ENCODE measurements at regions of chr16 and their contacts with region 1.

Region 1: DNA sequence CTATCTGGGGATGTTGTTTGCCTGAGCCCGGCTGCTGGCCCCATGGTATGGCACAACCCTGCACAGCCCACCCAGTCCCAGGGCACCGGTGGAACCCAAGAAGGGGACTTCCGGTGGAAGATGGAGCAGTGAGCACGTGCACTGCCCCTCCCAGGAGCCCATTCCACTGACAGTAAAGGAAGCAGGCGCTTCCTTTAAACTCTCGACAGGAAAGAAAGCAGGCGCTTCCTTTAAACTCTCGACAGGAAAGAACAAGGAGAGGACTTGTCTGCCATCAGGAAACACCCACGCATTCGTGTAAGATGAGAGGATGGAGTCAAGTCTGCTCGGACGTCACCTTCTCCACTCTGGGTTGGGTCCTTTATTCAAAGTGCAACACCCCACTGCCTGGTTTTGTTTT is 53.7 kb downstream of the IL21R start:
- DNase-seq: peak; percentile 68
- H3K4me3 ChIP-seq: no peak overlapping the region
- H3K27ac ChIP-seq: no peak overlapping the region
- H3K4me1 ChIP-seq: peaks cover 9% of the 10 kb centered on the region
- H3K27me3 ChIP-seq: no peaks in the 10 kb centered on the region
- CTCF ChIP-seq: no peak

Region 2: DNA sequence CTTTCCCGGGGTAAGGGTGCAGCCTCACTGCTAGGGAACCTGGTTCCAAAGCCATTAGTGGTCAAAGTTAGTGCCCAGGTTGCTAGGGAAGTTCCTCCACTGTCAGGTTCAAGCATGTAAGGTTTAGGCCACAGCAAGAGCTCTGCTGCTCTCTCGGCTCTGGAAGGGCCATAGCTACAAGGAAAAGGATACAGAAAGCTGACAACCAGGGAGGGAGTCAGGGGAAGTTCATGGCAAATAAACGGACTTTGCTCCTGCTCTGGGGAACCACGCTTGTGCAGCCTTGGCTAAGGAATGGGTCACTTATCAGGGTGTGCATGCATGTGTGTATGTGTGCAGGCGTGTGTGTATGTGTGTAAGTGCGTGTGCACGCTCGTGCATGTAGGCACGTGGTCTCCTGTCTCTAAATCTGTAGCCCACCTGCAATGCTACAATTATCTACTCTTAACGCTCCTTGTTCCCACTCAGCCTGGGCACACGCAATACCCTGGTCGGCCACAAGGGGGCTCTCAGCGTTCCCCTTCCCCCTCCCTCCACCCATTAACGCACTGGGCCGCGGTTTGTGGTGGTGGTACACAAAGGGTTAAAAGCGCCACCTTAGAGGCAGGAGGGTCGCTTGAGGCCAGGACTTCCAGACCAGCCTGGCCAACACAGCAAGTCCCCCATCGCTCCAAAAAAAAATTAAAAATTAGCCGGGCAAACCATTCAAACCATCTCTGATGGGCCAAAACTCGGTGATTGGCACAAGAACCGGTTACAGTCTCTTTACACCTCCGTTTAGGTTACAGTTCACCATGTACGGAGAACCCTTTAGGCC is 300.8 kb before region 1 on chr16:
- CTCF ChIA-PET with region 1: no interaction called
- POLR2A ChIA-PET with region 1: no interaction called
- intact Hi-C with region 1: loop called (anchors 2 kb)
- DNase-seq: peak; percentile 59
- H3K4me3 ChIP-seq: no peak overlapping the region
- H3K27ac ChIP-seq: no peak overlapping the region
- H3K4me1 ChIP-seq: no peaks in the 10 kb centered on the region
- H3K27me3 ChIP-seq: no peaks in the 10 kb centered on the region
- CTCF ChIP-seq: peak; percentile 98

Region 3: GRCh38 chr16:27367461-27368357 is 88.0 kb before region 1 on chr16:
- CTCF ChIA-PET with region 1: no interaction called
- POLR2A ChIA-PET with region 1: no interaction called
- intact Hi-C with region 1: loop called (anchors 5 kb)
- DNase-seq: peak; percentile 88
- H3K4me3 ChIP-seq: peak overlapping the region; percentile 0
- H3K27ac ChIP-seq: peak overlapping the region; percentile 54
- H3K4me1 ChIP-seq: peaks cover 15% of the 10 kb centered on the region
- H3K27me3 ChIP-seq: no peaks in the 10 kb centered on the region
- CTCF ChIP-seq: peak; percentile 75

Region 4: DNA sequence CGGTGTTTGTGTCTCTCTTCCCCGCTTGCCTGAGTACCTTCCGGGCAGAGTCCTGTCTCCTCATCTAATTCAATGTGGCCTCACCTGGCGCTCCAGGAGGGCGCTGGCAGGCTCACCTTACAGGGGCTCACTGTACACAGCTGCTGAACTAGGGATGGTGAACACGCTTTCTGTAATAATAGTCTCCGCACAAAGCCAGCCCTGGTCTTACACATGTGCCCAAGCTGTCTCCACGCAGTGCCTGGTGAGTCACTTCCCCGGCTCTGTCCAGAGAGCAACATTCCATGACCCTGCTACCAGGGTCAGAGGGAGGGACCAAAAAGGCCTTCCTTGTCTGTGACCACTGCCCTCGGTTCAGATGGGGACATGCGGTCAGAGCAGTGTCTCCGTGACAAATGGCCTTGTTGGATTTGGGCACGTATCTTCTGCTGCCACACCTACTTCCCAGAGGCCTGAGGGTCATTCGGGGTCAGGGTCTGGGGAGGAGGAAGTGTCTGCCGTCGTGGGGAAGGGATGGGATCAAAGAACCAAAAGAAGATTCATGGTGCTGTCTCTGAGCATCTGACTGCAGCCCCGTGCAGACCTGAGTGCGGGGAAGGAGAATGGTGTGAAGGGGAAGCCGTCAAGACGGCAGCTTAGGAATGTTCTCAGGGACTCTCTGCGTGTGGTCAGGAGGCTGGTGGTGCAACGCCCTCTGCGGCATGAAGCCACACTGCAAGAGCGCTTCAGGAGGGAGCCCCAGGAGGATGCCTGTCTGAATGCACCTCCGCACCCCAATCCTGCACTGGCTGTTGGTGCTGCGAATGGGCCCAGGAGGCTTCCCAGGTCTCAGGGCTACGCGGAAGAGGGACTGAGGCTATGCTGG is 15.1 kb after region 1 on chr16:
- CTCF ChIA-PET with region 1: no interaction called
- POLR2A ChIA-PET with region 1: no interaction called
- intact Hi-C with region 1: no loop called
- DNase-seq: no peak
- H3K4me3 ChIP-seq: no peak overlapping the region
- H3K27ac ChIP-seq: no peak overlapping the region
- H3K4me1 ChIP-seq: no peaks in the 10 kb centered on the region
- H3K27me3 ChIP-seq: no peaks in the 10 kb centered on the region
- CTCF ChIP-seq: no peak

Measured in A673 (cell line).